HCT116 (cell line): ENCODE measurements at regions of chr2 and their contacts with region 1.

Region 1: GRCh38 chr2:38947240-38948239 is 57.9 kb downstream of the ARHGEF33 start:
- DNase-seq: peak; percentile 82
- ATAC-seq: peak; percentile 93
- H3K4me3 ChIP-seq: 0 out of 4 replicates have a peak overlapping the region, but pooled peaks of 1 of the 2 experiments have one; percentile 4
- H3K27ac ChIP-seq: no peak overlapping the region
- H3K4me1 ChIP-seq: peaks cover 15 to 28% of the 10 kb centered on the region in 2 experiments
- H3K27me3 ChIP-seq: no peaks in the 10 kb centered on the region
- CTCF ChIP-seq: peak; percentile 82 to 88 (median 83)
- POLR2A ChIP-seq: no peak
- RAD21 ChIP-seq: peak; percentile 87

Region 2: DNA sequence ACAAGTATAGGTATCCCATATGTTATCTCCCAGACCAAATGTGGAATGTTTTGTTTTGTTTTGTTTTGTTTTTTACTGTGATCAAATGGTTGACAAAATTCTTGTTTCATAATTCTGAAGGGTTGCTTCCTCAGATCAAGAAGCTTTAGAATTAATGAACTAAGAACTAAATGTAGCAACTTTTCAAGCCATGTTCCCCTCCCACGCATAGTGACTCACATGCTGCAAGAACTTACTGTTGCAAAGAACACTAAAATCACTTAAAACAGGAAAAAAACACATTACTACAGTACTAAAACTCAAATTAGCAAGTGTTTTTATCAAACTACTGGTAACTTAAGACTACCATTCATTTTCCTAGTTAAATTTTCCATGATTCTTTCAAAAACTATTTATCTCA is 375.4 kb before region 1 on chr2:
- CTCF ChIA-PET with region 1: no interaction called
- POLR2A ChIA-PET with region 1: no interaction called
- RAD21 ChIA-PET with region 1: no interaction called
- intact Hi-C with region 1: no loop called
- DNase-seq: no peak
- ATAC-seq: no peak
- H3K4me3 ChIP-seq: no peak overlapping the region
- H3K27ac ChIP-seq: no peak overlapping the region
- H3K4me1 ChIP-seq: no peaks in the 10 kb centered on the region
- H3K27me3 ChIP-seq: no peaks in the 10 kb centered on the region
- CTCF ChIP-seq: no peak
- POLR2A ChIP-seq: no peak
- RAD21 ChIP-seq: no peak

Region 3: DNA sequence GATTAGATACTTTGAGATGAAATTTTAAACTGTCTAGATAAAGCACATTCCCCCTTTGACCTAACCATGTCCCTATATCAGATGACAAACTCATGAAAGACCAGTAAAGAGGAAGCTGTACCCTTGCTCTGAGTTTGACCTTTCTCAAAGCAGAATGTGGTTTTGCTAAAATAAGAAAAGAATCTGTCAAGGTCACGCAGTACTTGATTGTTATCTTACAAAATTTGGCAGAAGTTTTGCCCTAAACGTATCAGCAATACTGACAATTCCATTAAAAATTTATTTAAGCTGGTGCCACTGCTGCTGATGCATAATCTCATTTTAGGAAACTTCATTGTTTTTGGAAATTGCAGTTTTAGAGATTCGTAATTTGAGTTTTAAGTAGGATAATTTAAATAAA is 312.9 kb before region 1 on chr2:
- CTCF ChIA-PET with region 1: no interaction called
- POLR2A ChIA-PET with region 1: no interaction called
- RAD21 ChIA-PET with region 1: no interaction called
- intact Hi-C with region 1: no loop called
- DNase-seq: no peak
- ATAC-seq: no peak
- H3K4me3 ChIP-seq: no peak overlapping the region
- H3K27ac ChIP-seq: no peak overlapping the region
- H3K4me1 ChIP-seq: no peaks in the 10 kb centered on the region
- H3K27me3 ChIP-seq: no peaks in the 10 kb centered on the region
- CTCF ChIP-seq: no peak
- POLR2A ChIP-seq: no peak
- RAD21 ChIP-seq: no peak

Region 4: GRCh38 chr2:38935568-38936172 is 11.9 kb before region 1 on chr2:
- CTCF ChIA-PET with region 1: interaction called, 18 read pairs
- POLR2A ChIA-PET with region 1: no interaction called
- RAD21 ChIA-PET with region 1: interaction called in 1 of 2 experiments, 4 read pairs
- intact Hi-C with region 1: no loop called
- DNase-seq: no peak
- ATAC-seq: no peak
- H3K4me3 ChIP-seq: no peak overlapping the region
- H3K27ac ChIP-seq: no peak overlapping the region
- H3K4me1 ChIP-seq: no peaks in the 10 kb centered on the region
- H3K27me3 ChIP-seq: no peaks in the 10 kb centered on the region; the same call in 1 of the 2 replicates
- CTCF ChIP-seq: no peak
- POLR2A ChIP-seq: no peak
- RAD21 ChIP-seq: no peak

Region 5: GRCh38 chr2:39033980-39034379 is 86.4 kb after region 1 on chr2:
- CTCF ChIA-PET with region 1: interaction called, 18 read pairs
- POLR2A ChIA-PET with region 1: no interaction called
- RAD21 ChIA-PET with region 1: interaction called in 1 of 2 experiments, 4 read pairs
- intact Hi-C with region 1: no loop called
- DNase-seq: no peak
- ATAC-seq: no peak
- H3K4me3 ChIP-seq: no peak overlapping the region
- H3K27ac ChIP-seq: no peak overlapping the region
- H3K4me1 ChIP-seq: peaks cover 5 to 11% of the 10 kb centered on the region in 2 experiments; a peak in 3 of 4 replicates
- H3K27me3 ChIP-seq: no peaks in the 10 kb centered on the region
- CTCF ChIP-seq: no peak
- POLR2A ChIP-seq: no peak
- RAD21 ChIP-seq: no peak

Region 6: GRCh38 chr2:39227628-39228412 is 280.3 kb after region 1 on chr2:
- CTCF ChIA-PET with region 1: interaction called, 133 read pairs
- POLR2A ChIA-PET with region 1: no interaction called
- RAD21 ChIA-PET with region 1: interaction called, 10 to 15 read pairs
- intact Hi-C with region 1: loop called (anchors 1 kb)
- DNase-seq: peak; percentile 29
- ATAC-seq: peak; percentile 83
- H3K4me3 ChIP-seq: no peak overlapping the region
- H3K27ac ChIP-seq: no peak overlapping the region
- H3K4me1 ChIP-seq: 0 out of 4 replicates have a peak, but pooled peaks cover 0 to 3% of the 10 kb centered on the region in 2 experiments
- H3K27me3 ChIP-seq: no peaks in the 10 kb centered on the region
- CTCF ChIP-seq: peak; percentile 84 to 90 (median 86); a peak in 5 of 6 replicates
- POLR2A ChIP-seq: no peak
- RAD21 ChIP-seq: peak; percentile 85

Region 7: GRCh38 chr2:39728941-39729351 is 781.4 kb after region 1 on chr2:
- CTCF ChIA-PET with region 1: interaction called, 18 read pairs
- POLR2A ChIA-PET with region 1: no interaction called
- RAD21 ChIA-PET with region 1: no interaction called
- intact Hi-C with region 1: no loop called
- DNase-seq: peak; percentile 2
- ATAC-seq: peak; percentile 84
- H3K4me3 ChIP-seq: no peak overlapping the region
- H3K27ac ChIP-seq: no peak overlapping the region
- H3K4me1 ChIP-seq: 0 out of 4 replicates have a peak, but pooled peaks cover 0 to under 1% of the 10 kb centered on the region in 2 experiments
- H3K27me3 ChIP-seq: no peaks in the 10 kb centered on the region
- CTCF ChIP-seq: peak; percentile 55 to 92 (median 89)
- POLR2A ChIP-seq: no peak
- RAD21 ChIP-seq: peak; percentile 69